ENCODE measurements at regions of chr21 and their contacts with region 1.

Region 1: GRCh38 chr21:45651921-45652320 is 8.4 kb downstream of the PCBP3 start:
- DNase-seq: no peak
- ATAC-seq: no peak
- H3K4me3 ChIP-seq: no peak overlapping the region
- H3K27ac ChIP-seq: no peak overlapping the region
- H3K4me1 ChIP-seq: peaks cover 0 to 8% of the 10 kb centered on the region in 2 experiments; a peak in 1 of 4 replicates
- H3K27me3 ChIP-seq: no peaks in the 10 kb centered on the region
- CTCF ChIP-seq: no peak
- POLR2A ChIP-seq: no peak
- RAD21 ChIP-seq: no peak

Region 2: GRCh38 chr21:45688649-45689048 is 36.7 kb after region 1 on chr21:
- CTCF ChIA-PET with region 1: no interaction called
- POLR2A ChIA-PET with region 1: no interaction called
- RAD21 ChIA-PET with region 1: no interaction called
- intact Hi-C with region 1: loop called (anchors 5 kb)
- DNase-seq: no peak
- ATAC-seq: no peak
- H3K4me3 ChIP-seq: no peak overlapping the region
- H3K27ac ChIP-seq: no peak overlapping the region
- H3K4me1 ChIP-seq: no peaks in the 10 kb centered on the region
- H3K27me3 ChIP-seq: peaks cover 2% of the 10 kb centered on the region; the same call in 1 of the 2 replicates
- CTCF ChIP-seq: no peak
- POLR2A ChIP-seq: no peak
- RAD21 ChIP-seq: no peak

Region 3: DNA sequence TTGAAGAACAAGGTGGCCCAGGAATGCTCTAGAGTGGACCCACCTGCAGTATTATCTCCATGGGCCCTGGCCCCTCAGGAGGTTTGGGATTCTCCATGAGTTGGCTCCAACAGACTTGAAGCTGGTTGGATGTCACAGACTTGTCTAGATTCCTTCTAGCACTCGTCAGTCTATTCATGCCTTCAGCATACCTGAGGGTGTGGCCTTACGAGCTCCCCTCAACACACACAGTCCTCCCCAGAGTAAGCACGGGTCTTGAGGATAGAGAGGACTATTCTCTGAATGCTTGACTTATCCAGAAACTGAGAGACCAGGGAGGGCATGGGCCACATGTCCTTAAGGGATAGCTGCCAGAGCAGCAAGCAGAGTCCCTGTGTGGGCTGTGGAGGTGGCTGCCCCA is 283.7 kb after region 1 on chr21:
- CTCF ChIA-PET with region 1: no interaction called
- POLR2A ChIA-PET with region 1: no interaction called
- RAD21 ChIA-PET with region 1: no interaction called
- intact Hi-C with region 1: no loop called
- DNase-seq: no peak
- ATAC-seq: no peak
- H3K4me3 ChIP-seq: no peak overlapping the region
- H3K27ac ChIP-seq: no peak overlapping the region
- H3K4me1 ChIP-seq: no peaks in the 10 kb centered on the region
- H3K27me3 ChIP-seq: no peaks in the 10 kb centered on the region
- CTCF ChIP-seq: no peak
- POLR2A ChIP-seq: no peak
- RAD21 ChIP-seq: no peak